ENCODE measurements at regions of chr20 and their contacts with region 1.

Region 1: DNA sequence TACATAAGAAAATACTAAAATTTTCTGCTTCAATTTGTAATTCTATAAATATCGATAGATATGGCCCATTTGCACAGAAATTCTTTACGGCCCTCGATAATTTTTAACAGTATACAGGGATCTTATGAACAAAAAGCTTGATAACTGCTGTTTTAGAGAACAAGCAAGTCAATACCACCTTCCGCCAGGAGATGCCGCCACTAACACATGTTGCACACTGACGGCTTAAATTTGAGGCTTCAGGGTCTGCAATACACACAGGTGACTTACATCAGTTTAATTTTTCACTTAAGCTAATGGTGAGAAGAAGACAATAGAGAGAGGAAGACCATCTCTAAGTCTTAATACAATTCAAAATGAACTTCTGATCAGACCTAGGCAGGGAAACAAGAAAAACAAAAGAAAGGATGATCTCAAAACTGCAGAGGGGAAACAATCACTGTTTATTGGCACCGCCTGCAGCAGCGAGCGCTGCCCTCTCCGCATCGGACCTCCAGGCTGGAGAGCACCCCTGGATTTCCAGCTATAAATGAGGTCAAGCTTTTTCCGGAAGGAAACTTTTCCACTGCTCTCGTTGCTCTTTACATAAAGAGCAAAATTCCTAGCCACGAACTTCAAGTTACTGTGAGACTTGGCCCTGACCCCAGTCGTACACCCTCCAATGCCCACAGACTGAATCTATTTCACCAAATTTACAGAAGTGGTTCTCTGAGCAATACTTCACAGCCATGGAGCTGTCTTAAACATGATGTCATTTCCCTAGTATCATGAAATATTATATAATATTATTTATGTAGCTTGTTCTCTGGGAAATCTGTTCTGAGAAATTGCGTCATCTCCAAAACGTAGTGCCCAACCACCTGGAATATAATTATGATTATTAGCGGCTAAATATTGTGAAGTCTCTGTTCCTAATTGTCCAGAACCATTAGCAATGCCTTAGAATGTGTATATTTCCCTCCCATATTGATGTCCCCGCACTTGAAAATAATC is 54.1 kb downstream of the OTOR start:
- DNase-seq: no peak
- H3K4me3 ChIP-seq: no peak overlapping the region
- H3K27me3 ChIP-seq: peaks cover 2% of the 10 kb centered on the region; the same call in 1 of the 2 replicates
- CTCF ChIP-seq: peak; percentile 89

Region 2: GRCh38 chr20:16729565-16730456 is 72.4 kb before region 1 on chr20 and contains the start of gene SNRPB2:
- CTCF ChIA-PET with region 1: no interaction called
- POLR2A ChIA-PET with region 1: no interaction called
- DNase-seq: peak; percentile 60
- H3K4me3 ChIP-seq: peak within 1 kb of the TSS; percentile 93
- H3K27me3 ChIP-seq: peaks cover 1% of the 10 kb centered on the region; the same call in 1 of the 2 replicates
- CTCF ChIP-seq: no peak
- polyA plus RNA-seq, gene SNRPB2: 28.1 and 70.3 TPM in 2 replicates

Region 3: DNA sequence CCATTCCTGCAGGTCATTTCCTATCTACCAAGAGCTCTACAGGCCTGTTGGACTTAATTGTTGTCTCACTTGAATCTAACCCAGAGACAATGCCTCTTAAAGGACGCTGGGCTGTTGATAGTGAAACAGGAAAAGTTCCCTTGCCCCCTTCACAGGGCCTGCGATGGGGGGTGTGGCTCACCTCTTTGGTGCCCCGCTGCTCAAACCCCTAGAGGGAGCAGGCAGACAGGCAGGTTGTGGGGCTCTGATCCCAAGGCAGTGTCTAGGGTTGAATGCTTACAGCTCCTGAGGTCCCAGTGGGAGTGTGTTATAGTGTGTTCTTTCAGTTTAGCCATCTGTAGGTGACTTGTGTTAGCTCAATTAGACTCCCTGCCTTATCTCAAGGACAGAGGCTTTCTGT is 14.0 kb after region 1 on chr20:
- CTCF ChIA-PET with region 1: interaction called, 51 read pairs
- POLR2A ChIA-PET with region 1: no interaction called
- DNase-seq: no peak
- H3K4me3 ChIP-seq: no peak overlapping the region
- H3K27me3 ChIP-seq: 0 out of 2 replicates have a peak, but pooled peaks cover 2% of the 10 kb centered on the region
- CTCF ChIP-seq: no peak

Region 4: DNA sequence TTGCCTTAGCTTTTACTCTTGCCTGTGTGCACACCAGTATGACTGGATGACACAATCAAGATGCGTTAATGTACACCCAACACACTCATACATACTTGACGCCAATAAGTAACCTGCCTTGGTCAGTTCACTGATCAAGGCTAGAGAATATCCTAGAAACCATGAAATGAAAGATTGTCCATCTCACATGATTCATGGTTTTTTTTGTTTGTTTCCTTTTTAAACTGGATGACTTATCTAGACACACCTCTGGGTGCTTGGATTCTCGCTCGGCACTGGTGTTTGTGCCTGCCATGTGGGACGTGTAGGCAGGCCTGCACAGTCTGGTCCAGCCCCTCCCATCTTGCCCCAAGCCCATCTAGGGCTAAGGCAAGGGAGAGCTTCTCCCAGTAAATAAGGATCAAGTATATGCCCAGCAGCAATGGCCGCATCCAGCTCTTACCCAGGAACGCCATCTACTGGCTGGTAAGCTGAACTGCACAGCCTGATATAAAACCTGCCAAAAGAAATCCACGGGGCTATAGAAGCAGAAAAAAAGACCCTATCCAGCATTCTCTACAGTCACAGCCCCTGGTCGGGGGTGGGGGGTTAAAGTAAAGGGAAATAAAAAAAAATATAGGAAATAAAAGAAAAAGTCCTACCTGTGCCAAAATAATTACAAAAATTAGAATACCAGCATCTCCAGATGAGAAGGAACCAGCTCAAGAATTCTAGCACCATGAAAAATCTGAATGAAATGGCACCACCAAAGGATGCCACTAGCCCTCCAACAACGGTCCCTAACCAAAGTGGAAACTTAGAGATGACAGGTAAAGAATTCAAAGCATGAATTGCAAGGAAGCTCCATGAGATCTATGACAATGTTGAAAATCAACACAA is 19.2 kb after region 1 on chr20:
- CTCF ChIA-PET with region 1: interaction called, 51 read pairs
- POLR2A ChIA-PET with region 1: no interaction called
- DNase-seq: no peak
- H3K4me3 ChIP-seq: no peak overlapping the region
- H3K27me3 ChIP-seq: no peaks in the 10 kb centered on the region
- CTCF ChIP-seq: peak; percentile 95

Region 5: GRCh38 chr20:16864069-16864468 is 61.9 kb after region 1 on chr20:
- CTCF ChIA-PET with region 1: no interaction called
- POLR2A ChIA-PET with region 1: no interaction called
- DNase-seq: no peak
- H3K4me3 ChIP-seq: no peak overlapping the region
- H3K27me3 ChIP-seq: no peaks in the 10 kb centered on the region
- CTCF ChIP-seq: no peak

Region 6: DNA sequence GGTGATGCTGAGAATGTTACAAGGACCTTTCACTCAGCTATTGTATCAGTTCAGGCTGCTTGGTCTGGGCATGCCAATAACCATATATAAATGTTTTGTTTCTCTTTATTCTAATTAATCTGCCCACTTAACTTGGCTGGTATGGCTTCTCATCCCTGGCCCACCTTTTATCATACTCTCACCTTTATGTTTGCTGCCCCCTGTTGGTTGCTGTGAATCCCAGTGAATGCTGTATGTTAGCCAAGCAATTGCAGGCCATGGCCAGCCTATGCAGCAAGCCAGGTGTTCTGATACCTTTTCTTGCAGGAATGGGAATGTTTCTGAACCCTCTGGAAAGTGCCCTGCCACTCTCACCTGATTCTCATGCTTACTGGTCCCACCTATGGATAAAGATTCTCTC is 479.3 kb after region 1 on chr20:
- CTCF ChIA-PET with region 1: interaction called, 35 read pairs
- POLR2A ChIA-PET with region 1: no interaction called
- DNase-seq: no peak
- H3K4me3 ChIP-seq: no peak overlapping the region
- H3K27me3 ChIP-seq: no peaks in the 10 kb centered on the region
- CTCF ChIP-seq: peak; percentile 45

Region 7: GRCh38 chr20:17421493-17421892 is 619.3 kb after region 1 on chr20:
- CTCF ChIA-PET with region 1: interaction called, 338 read pairs
- POLR2A ChIA-PET with region 1: no interaction called
- DNase-seq: no peak
- H3K4me3 ChIP-seq: no peak overlapping the region
- H3K27me3 ChIP-seq: no peaks in the 10 kb centered on the region; the same call in none of the 2 replicates
- CTCF ChIP-seq: no peak

Region 8: DNA sequence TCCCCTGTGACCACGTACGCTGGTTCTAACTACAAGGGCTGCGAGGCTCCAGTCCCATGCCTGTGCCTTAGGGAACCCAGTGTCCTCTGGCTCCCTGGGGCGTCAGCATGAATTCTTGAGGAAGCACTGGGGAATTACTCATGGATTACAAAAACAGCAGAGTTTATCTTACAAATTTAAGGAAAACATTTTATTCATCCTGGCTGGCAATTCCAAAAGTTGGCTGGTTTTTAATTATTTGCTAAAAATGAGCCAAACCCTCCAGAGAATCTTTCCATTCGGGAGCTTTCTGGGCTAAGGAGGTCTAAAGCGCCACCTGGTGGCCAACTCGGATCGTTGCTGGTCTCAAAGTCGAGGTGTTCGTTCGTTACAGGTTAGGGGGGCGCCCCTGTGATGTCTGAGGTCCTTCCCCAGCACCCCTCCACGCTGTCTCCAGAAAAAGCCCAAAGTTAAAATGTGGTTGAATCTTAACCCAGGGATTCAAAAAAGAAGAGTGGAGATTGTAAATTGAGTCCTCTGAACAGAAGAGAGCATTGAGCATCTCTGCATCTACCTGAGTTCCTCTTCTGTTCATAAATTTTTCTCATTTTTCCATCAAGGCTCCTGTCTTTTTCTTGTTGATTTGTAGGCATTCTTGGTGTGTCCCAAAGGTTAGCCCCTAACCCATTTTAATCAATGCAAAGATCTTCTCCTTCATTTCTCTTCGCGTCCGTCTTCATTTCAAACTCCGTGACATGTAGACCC is 629.6 kb after region 1 on chr20:
- CTCF ChIA-PET with region 1: interaction called, 338 read pairs
- POLR2A ChIA-PET with region 1: no interaction called
- DNase-seq: no peak
- H3K4me3 ChIP-seq: no peak overlapping the region
- H3K27me3 ChIP-seq: no peaks in the 10 kb centered on the region
- CTCF ChIP-seq: peak; percentile 84

Measured in BJ (cell line).